ENCODE measurements at regions of chr1 and their contacts with region 1.

Region 1: DNA sequence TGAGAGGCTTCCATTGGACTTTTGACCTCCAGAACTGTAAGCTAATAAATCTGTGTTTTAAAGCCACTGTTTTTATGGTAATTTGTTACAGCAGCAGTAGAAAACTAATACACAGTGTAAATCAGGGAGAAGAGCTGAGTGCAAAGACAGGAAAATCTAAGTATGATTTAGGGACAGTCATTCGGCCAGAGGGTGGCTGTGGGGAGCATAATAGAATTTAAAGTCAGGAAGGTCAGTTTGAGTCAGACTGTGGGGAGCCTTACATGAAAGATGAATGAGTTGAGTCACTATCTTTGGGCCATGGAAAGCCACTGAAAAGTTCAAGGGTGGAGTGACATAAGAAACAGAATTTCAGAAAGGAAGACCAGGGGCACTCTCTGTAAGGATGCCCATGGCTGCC is 52.4 kb upstream of the SSX2IP start:
- ATAC-seq: peak in 1 of 8 experiments; percentile 38
- H3K4me3 ChIP-seq: no peak overlapping the region
- H3K27ac ChIP-seq: no peak overlapping the region
- H3K4me1 ChIP-seq: peaks cover 0 to 2% of the 10 kb centered on the region in 2 donors

Region 2: DNA sequence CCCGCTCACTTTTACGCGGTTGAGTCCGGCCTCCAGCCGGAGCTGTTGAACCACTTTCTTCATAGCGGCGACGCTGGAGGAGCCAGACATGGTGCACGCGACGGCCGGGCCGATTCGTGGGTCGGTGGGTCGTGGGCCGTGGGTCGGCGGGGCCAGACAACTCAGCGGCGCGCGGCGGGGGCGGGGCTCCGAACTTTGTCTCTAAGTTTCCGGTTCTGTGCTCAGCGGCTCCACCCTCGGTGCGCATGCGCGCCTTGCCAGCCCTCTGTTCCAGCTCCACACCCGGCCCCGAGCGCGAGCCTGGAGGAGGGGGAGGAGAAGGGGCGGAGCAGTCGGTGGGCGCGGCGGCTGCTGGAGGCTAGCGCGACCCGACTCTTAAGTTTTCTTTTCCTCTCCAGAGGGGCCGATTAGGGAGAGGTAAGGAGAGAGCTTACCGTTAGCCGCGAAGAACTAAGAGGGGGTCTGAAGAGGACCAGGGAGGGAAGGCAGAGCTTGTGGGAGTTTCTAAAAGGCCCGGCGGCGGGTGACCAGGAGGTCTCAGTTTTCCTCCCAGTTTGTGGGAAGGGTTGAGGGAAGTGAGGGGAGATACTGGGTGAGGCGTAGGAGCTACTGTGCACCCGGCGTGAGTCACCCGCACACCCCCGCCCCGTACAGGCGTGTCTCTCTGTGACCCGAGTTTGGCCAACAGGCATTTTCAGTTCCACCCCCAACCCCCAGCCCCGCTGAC is 236.5 kb before region 1 on chr1 and contains the starts of genes GNG5 and SPATA1:
- in situ Hi-C with region 1: loop called in 1 of 9 experiments (anchors 10 kb)
- ATAC-seq: peak; percentile 83 to 96 (median 93)
- H3K4me3 ChIP-seq: peak within 1 kb of the TSS; percentile 80 to 96 (median 90)
- H3K27ac ChIP-seq: peak within 1 kb of the TSS; percentile 64 to 83
- H3K4me1 ChIP-seq: peaks cover 10 to 28% of the 10 kb centered on the region in 2 donors
- total RNA-seq, gene GNG5: 59.2 to 175 (median 83.1) TPM
- total RNA-seq, gene SPATA1: 0.67 to 3.3 (median 1.6) TPM

Region 3: GRCh38 chr1:85015826-85016225 is 273.2 kb after region 1 on chr1:
- in situ Hi-C with region 1: no loop called
- ATAC-seq: no peak
- H3K4me3 ChIP-seq: no peak overlapping the region
- H3K27ac ChIP-seq: no peak overlapping the region
- H3K4me1 ChIP-seq: peaks cover 0 to 9% of the 10 kb centered on the region in 2 donors